Posterior vena cava (tissue), 2 donors: ENCODE measurements at regions of chr14 and their contacts with region 1.

Region 1: GRCh38 chr14:69726761-69727511 is 40.0 kb upstream of the SRSF5 start:
- DNase-seq: peak; percentile 96

Region 2: GRCh38 chr14:69586404-69586803 is 140.5 kb before region 1 on chr14:
- intact Hi-C with region 1: loop called (anchors 2 to 5 kb)
- DNase-seq: no peak

Region 3: GRCh38 chr14:69600304-69600891 is 126.5 kb before region 1 on chr14:
- intact Hi-C with region 1: loop called (anchors 5 kb)
- DNase-seq: peak; percentile 17

Region 4: DNA sequence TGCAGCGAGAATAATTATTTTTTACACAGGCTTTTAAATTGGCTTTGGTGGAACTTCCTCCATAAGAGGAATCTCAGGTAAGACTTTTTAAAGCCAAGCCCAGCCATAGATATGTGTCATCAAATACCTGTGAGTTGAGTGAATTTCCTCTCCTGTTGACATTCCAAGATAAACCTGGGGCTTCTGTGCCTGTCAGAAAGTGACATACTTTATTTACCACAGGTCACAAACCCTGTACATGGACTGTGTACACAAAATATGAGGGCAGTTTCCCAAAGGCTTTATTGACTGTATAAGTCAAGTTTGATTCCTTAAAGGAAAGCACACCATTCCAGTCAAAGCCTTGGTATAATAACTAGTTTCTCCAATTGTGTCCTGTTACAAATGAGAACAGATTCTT is 14.1 kb after region 1 on chr14:
- intact Hi-C with region 1: no loop called
- DNase-seq: no peak

Region 5: DNA sequence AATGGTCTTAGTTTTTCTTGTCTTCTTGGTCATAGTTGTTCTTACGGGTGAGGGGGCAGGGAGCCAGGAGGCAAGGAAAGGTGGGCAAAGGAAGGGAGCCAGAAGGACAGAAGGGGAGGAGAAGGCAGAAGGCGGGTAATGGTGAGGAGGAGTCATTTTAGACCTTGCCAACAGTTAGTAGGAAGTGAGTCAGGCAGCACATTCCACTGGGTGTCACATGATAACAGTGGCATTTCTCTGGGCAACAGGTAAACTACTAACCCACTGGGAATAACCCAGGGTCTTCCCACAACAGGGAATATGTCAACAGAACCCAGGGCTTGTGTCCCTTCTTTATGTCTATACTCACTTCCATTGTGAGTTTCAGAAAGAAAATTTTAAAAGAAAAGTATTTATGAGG is 334.2 kb after region 1 on chr14:
- intact Hi-C with region 1: no loop called
- DNase-seq: no peak